ENCODE measurements at regions of chr15 and their contacts with region 1.

Region 1: GRCh38 chr15:53022788-53023187 is 232.7 kb upstream of the ONECUT1 start:
- DNase-seq: no peak
- H3K4me3 ChIP-seq: no peak overlapping the region
- H3K27ac ChIP-seq: no peak overlapping the region
- H3K4me1 ChIP-seq: no peaks in the 10 kb centered on the region
- H3K27me3 ChIP-seq: no peaks in the 10 kb centered on the region
- CTCF ChIP-seq: no peak

Region 2: GRCh38 chr15:53038655-53038941 is 15.8 kb after region 1 on chr15:
- CTCF ChIA-PET with region 1: no interaction called
- POLR2A ChIA-PET with region 1: no interaction called
- intact Hi-C with region 1: loop called (anchors 1 kb)
- DNase-seq: no peak
- H3K4me3 ChIP-seq: no peak overlapping the region
- H3K27ac ChIP-seq: no peak overlapping the region
- H3K4me1 ChIP-seq: no peaks in the 10 kb centered on the region
- H3K27me3 ChIP-seq: no peaks in the 10 kb centered on the region
- CTCF ChIP-seq: no peak